Stomach (tissue), 19 donors: ENCODE measurements at regions of chr1 and their contacts with region 1.

Region 1: GRCh38 chr1:10338047-10338446 is 60.8 kb upstream of the PGD start:
- DNase-seq: peak in 1 of 2 donors; percentile 75
- H3K4me3 ChIP-seq: no peak overlapping the region
- H3K27ac ChIP-seq: no peak overlapping the region
- H3K4me1 ChIP-seq: peaks cover 0 to 9% (median 2%) of the 10 kb centered on the region in 4 donors
- H3K27me3 ChIP-seq: no peaks in the 10 kb centered on the region
- CTCF ChIP-seq: peak in 5 of 7 experiments; percentile 42 to 65 (median 56)
- EP300 ChIP-seq: no peak
- POLR2A ChIP-seq: no peak

Region 2: GRCh38 chr1:10209905-10210810 is 127.9 kb before region 1 on chr1 and contains the start of gene KIF1B:
- intact Hi-C with region 1: loop called (anchors 10 kb)
- DNase-seq: peak; percentile 99
- H3K4me3 ChIP-seq: peak within 1 kb of the TSS; percentile 75 to 92 (median 91)
- H3K27ac ChIP-seq: peak within 1 kb of the TSS; percentile 96 to 100 (median 98)
- H3K4me1 ChIP-seq: peaks cover 7 to 48% (median 29%) of the 10 kb centered on the region in 4 donors
- H3K27me3 ChIP-seq: no peaks in the 10 kb centered on the region
- CTCF ChIP-seq: peak in 6 of 7 experiments; percentile 88 to 99 (median 96)
- EP300 ChIP-seq: no peak
- POLR2A ChIP-seq: peak in 2 of 4 donors; percentile 5 to 39
- total RNA-seq, gene KIF1B: 25.8 to 82.2 (median 37.9) TPM